Cardiac septum (tissue), 1 donor: ENCODE measurements at regions of chr1 and their contacts with region 1.

Region 1: GRCh38 chr1:15526490-15527339 is at the start of gene DNAJC16:
- DNase-seq: peak; percentile 99
- total RNA-seq, gene DNAJC16: 11.0 TPM

Region 2: DNA sequence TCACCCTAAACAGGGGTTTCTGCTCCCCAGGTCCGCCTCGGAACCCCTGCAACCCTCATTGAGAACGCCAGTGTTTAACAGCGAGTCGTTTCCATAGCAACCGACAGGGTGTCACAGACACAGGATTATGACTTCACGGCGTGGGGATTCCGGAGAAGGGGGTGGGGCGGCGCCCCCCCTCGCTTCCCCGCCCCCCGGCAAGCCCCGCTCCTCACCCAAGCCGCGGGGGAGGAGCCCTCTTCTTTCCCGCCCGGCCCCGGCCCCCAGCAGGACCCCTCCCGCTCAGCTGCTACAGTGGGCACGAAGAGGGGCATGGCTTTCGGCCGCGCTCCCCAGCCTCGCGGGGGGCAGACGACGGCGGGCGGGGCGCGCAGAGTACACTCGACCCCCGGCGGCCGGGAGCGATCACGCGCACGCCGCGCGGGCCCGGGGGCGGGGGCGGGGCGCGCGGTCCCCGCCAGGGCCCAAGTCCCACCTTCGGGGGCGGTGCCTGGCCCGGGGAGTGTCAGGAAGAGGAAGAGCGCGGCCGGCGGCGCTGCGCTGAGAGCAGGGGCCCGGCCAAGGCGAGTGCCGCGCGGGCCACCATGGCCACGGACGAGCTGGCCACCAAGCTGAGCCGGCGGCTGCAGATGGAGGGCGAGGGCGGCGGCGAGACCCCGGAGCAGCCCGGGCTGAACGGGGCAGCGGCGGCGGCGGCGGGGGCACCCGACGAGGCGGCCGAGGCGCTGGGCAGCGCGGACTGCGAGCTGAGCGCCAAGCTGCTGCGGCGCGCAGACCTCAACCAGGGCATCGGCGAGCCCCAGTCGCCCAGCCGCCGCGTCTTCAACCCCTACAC is 117.1 kb before region 1 on chr1 and contains the start of gene EFHD2:
- intact Hi-C with region 1: loop called (anchors 1 kb)
- DNase-seq: peak; percentile 95
- total RNA-seq, gene EFHD2: 14.3 TPM

Region 3: GRCh38 chr1:15835741-15836510 is 309.2 kb after region 1 on chr1:
- intact Hi-C with region 1: loop called (anchors 2 kb)
- DNase-seq: peak; percentile 100